ENCODE measurements at regions of chr15 and their contacts with region 1.

Region 1: DNA sequence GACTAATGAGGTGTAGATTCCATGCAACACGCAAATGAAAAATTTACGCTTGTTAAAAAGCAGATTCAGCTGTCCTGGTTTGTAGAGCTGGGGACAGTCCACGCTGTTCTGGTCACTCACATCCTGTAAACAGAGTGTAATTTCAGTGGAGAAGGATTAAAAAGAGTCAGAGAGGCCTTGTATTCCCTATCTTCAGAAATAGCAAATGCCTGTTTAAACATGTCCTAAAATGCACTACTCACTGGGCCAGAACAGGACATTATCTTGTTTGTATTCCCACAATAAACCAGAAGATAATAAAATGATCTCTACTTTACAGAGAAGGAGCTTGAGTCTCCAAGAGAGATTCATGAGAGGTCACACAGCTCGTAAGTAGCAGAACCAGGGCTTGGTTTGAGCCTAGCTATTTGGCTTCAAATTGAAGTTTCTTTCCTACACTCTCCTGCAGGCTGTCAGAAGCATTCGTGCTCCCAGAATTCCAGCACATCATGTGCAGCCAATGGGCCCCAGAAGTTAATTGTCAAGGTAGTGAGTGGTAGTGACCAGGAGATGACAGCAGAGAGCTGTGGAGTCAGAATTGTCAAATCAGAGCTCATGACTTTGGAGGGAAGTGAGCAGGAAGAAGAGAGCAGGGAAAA is 242.5 kb downstream of the ATP8B4 start:
- DNase-seq: peak; percentile 43 to 49
- H3K4me3 ChIP-seq: no peak overlapping the region
- H3K27ac ChIP-seq: no peak overlapping the region
- H3K4me1 ChIP-seq: peaks cover 0 to 5% (median 0%) of the 10 kb centered on the region in 4 experiments; a peak in 1 of 7 replicates
- H3K27me3 ChIP-seq: no peaks in the 10 kb centered on the region
- CTCF ChIP-seq: peak; percentile 52 to 94 (median 91)
- EP300 ChIP-seq: no peak
- POLR2A ChIP-seq: no peak
- RAD21 ChIP-seq: peak; percentile 98

Region 2: GRCh38 chr15:49793943-49794342 is 82.6 kb before region 1 on chr15:
- CTCF ChIA-PET with region 1: no interaction called
- POLR2A ChIA-PET with region 1: no interaction called
- DNase-seq: no peak
- H3K4me3 ChIP-seq: no peak overlapping the region
- H3K27ac ChIP-seq: no peak overlapping the region
- H3K4me1 ChIP-seq: no peaks in the 10 kb centered on the region
- H3K27me3 ChIP-seq: no peaks in the 10 kb centered on the region
- CTCF ChIP-seq: no peak
- EP300 ChIP-seq: no peak
- POLR2A ChIP-seq: no peak
- RAD21 ChIP-seq: no peak

Region 3: DNA sequence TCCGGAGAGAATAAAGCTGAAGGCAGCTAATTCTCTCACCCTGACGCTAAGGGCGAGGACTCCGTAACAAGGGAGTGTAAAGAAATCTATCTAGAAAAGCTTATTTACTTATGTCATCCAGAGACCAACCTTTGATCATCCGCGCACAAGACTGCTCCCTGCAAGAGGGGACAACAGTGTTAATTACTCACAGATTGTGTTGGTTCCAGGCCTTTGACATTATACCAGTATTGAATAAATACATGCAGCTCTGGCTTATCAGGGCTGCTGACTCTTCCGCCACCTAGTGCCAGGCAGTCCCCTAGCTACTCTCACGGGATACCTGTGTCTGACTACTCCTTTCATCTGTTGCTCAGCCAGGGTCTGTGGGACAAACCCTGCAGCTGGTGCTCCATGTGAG is 44.0 kb before region 1 on chr15:
- CTCF ChIA-PET with region 1: interaction called, 12 read pairs
- POLR2A ChIA-PET with region 1: no interaction called
- DNase-seq: peak; percentile 13 to 48
- H3K4me3 ChIP-seq: no peak overlapping the region
- H3K27ac ChIP-seq: no peak overlapping the region
- H3K4me1 ChIP-seq: no peaks in the 10 kb centered on the region
- H3K27me3 ChIP-seq: no peaks in the 10 kb centered on the region
- CTCF ChIP-seq: peak; percentile 63 to 83 (median 80)
- EP300 ChIP-seq: no peak
- POLR2A ChIP-seq: no peak
- RAD21 ChIP-seq: peak; percentile 76 to 82

Region 4: DNA sequence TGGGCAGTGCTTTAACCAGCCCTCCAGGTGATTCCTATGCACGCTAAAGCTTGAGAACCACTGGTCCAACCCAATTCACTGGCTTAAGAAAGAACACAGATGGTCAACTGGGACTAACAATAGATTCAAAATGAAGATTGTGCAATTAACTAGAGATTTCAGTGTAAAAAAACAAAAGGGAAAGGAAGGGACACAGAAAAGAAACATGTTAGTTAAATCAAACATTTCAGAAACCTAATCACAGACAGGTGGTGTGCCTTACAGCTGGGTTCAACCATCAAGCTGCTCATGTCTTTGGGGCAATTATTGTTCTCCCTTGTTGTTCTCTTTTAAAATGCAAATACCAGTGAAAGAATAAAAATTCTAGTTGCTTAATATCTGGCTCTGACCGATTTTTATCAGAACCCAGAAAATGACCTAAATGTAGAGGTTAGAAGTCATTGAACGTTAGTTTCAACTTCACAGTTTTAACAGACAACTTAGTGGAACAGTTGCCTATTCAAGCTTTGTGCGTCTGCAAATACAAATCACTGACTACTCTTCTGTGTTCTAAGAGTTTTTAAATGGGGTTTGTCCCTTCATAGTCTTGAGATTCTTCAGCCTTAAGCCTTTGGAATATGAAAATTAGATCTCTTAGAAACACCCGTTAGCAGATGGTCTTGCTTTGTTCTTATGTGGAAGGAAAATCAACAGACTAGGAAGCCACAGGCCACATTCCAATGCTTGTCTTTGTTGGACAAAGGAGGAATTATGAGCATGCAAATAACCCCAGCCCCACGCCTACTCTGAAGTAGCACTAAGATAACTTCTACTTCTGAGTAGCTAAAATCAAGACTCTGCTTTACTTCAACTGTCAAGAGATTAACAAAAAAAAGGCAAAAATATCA is 19.1 kb after region 1 on chr15:
- CTCF ChIA-PET with region 1: interaction called, 31 read pairs
- POLR2A ChIA-PET with region 1: no interaction called
- DNase-seq: no peak
- H3K4me3 ChIP-seq: peak overlapping the region in 1 of 4 experiments; percentile 25; a peak in 1 of 8 replicates
- H3K27ac ChIP-seq: no peak overlapping the region
- H3K4me1 ChIP-seq: peaks cover 0 to 7% (median 2%) of the 10 kb centered on the region in 4 experiments; a peak in 4 of 7 replicates
- H3K27me3 ChIP-seq: no peaks in the 10 kb centered on the region
- CTCF ChIP-seq: no peak
- EP300 ChIP-seq: no peak
- POLR2A ChIP-seq: no peak
- RAD21 ChIP-seq: no peak

Region 5: DNA sequence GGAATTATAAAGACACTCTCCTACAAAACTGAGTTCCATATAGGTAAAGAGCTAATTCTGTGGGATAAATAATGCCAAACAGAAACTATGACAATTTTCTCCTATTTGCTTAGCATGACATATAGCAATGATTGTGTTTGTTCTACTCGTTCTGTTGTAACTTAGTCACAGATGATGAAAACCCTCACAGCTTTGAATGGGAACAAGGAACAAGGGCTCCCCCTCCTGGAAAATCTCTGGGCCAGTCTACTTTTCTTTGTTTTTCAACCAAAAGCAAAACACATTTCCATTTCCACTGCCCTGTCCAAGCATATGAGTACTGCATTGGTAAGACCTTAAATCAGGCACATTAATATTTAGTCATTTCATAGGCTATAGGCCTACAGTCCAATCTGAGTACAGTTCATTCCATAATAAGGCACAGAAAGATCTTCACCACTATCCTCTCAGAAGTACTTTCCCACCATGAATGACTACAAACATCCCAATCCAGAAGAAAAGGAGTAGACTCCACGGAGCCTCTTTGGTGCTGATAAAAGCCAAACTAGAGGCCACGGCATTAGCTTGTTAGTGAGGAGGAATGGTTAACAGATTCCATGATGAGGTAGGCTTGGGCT is 175.4 kb after region 1 on chr15:
- CTCF ChIA-PET with region 1: interaction called, 92 read pairs
- POLR2A ChIA-PET with region 1: no interaction called
- DNase-seq: no peak
- H3K4me3 ChIP-seq: no peak overlapping the region
- H3K27ac ChIP-seq: no peak overlapping the region
- H3K4me1 ChIP-seq: no peaks in the 10 kb centered on the region
- H3K27me3 ChIP-seq: no peaks in the 10 kb centered on the region
- CTCF ChIP-seq: peak in 2 of 3 experiments; percentile 63 to 70; a peak in 3 of 4 replicates
- EP300 ChIP-seq: no peak
- POLR2A ChIP-seq: no peak
- RAD21 ChIP-seq: peak; percentile 89 to 91

Region 6: DNA sequence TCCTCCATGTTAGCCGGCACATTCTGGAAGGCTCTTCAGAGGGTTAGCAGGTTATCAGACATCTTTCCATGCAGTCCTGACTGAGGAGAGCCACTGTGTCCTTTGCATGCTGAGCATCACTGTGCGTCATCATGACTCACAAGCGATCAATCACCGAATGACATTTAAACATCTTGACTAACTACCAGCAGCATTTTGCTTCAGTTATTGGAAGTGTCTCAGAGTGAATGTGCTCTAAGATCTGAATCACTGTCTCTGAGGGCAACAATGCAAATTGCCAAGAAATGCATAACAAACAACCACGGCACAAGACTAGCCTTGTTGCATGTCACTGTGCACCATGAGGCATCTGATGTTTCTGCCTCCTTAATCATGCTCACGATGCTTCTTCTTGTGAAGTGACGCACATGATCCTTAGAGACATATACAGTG is 260.8 kb after region 1 on chr15:
- CTCF ChIA-PET with region 1: interaction called, 11 read pairs
- POLR2A ChIA-PET with region 1: no interaction called
- DNase-seq: no peak
- H3K4me3 ChIP-seq: no peak overlapping the region
- H3K27ac ChIP-seq: no peak overlapping the region
- H3K4me1 ChIP-seq: peaks cover 0 to 3% (median 0%) of the 10 kb centered on the region in 4 experiments; a peak in 1 of 7 replicates
- H3K27me3 ChIP-seq: no peaks in the 10 kb centered on the region
- CTCF ChIP-seq: no peak
- EP300 ChIP-seq: no peak
- POLR2A ChIP-seq: no peak
- RAD21 ChIP-seq: no peak

Measured in H1 (cell line).